MCF 10A (cell line): ENCODE measurements at regions of chr11 and their contacts with region 1.

Region 1: DNA sequence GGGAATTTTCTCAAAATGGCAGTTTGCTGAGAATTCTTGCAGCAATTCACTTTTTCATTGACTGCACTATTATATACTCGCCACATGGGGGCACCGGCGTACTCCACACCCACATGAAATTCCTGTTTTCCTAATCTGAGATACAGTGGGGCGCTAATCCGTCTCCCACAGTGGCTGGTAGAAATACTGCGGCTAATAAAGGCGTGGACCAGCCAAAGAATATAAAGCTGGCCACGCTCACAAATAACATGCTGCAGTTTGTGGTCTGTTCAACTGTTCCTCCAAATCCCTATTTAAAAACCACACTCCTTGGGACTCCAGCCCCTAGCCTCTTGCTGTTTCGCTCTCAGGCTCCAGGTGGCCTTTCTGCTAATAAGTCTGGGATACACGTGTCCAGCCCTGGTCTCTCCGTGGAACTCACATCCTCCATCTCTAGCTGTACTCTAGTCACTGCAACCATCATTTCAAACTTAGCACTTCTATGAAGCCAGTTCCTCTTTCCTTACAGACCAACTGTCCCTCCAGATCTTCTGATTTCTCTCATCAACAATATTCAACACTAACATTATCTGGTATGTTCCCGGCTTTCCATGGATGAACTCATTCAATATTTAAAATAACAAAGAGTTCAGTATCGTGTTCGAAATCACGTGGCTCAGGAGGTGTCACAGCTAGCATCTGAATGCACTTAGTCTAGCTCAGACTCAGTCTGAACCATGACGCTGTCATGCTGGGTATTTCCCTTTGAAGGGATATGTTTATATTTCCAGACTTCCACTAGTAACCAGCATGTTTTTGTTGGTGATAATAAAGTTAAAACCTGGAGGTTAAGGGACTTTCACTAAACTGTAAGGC is 22.0 kb downstream of the TBRG1 start:
- DNase-seq: peak; percentile 72
- H3K4me3 Mint-ChIP-seq: no peak overlapping the region
- H3K27ac Mint-ChIP-seq: no peak overlapping the region
- H3K4me1 Mint-ChIP-seq: peaks cover 15% of the 10 kb centered on the region
- H3K27me3 Mint-ChIP-seq: no peaks in the 10 kb centered on the region
- CTCF ChIP-seq: peak; percentile 79

Region 2: GRCh38 chr11:124633355-124633754 is 11.3 kb before region 1 on chr11:
- CTCF ChIA-PET with region 1: interaction called, 44 read pairs
- POLR2A ChIA-PET with region 1: interaction called, 4 read pairs
- intact Hi-C with region 1: no loop called
- DNase-seq: peak; percentile 13
- H3K4me3 Mint-ChIP-seq: no peak overlapping the region
- H3K27ac Mint-ChIP-seq: no peak overlapping the region
- H3K4me1 Mint-ChIP-seq: no peaks in the 10 kb centered on the region
- H3K27me3 Mint-ChIP-seq: no peaks in the 10 kb centered on the region
- CTCF ChIP-seq: no peak

Region 3: GRCh38 chr11:124667601-124668000 is 22.9 kb after region 1 on chr11:
- CTCF ChIA-PET with region 1: interaction called, 15 read pairs
- POLR2A ChIA-PET with region 1: interaction called, 3 read pairs
- intact Hi-C with region 1: no loop called
- DNase-seq: no peak
- H3K4me3 Mint-ChIP-seq: no peak overlapping the region
- H3K27ac Mint-ChIP-seq: no peak overlapping the region
- H3K4me1 Mint-ChIP-seq: peaks cover 5% of the 10 kb centered on the region
- H3K27me3 Mint-ChIP-seq: no peaks in the 10 kb centered on the region
- CTCF ChIP-seq: no peak

Region 4: DNA sequence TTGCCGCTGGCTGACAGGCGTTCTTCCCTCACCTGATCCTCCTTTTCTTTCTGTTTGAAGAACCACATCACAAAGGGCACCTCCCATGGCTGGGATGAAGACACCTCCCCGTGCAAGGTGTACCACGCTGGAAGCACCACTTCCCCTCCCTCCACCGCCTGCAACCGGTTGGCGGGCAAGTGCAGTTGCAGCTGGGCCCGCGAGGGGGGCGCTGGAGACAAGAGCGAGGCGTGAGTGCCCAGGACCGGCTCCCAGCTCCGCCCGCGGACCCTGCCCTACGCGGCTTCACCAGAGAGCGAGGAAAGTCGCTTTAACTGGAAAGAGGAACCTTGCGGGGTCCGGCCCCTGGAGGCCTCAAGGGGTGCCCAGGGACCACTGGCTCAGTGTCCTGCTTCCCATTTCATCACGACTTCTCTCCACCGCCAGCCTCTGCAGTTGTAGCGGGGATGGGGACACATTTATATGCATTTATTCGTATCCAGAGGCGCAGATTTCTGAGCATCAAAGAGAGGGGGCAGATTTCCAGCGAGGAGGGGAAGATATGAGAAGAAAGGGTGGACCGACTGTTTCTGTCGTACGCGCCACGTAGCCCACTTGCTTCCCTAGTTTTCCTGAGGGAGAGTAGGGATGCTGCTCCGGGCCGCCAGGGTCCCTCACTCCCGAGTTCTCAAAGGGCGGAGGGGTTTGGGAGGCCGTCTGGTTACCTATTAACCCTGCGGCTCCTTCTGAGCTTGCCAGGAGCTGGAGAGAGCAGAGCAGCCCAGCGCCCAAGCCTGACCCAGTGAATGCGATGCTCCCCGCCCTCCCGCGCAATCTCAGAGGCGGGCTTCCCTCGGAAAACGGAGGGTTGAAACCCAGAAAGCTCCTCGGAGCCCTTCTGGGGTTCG is 113.9 kb after region 1 on chr11:
- CTCF ChIA-PET with region 1: interaction called, 9 read pairs
- POLR2A ChIA-PET with region 1: no interaction called
- intact Hi-C with region 1: loop called (anchors 1 kb)
- DNase-seq: peak; percentile 41
- H3K4me3 Mint-ChIP-seq: peak overlapping the region; percentile 33
- H3K27ac Mint-ChIP-seq: no peak overlapping the region
- H3K4me1 Mint-ChIP-seq: peaks cover 5% of the 10 kb centered on the region
- H3K27me3 Mint-ChIP-seq: no peaks in the 10 kb centered on the region
- CTCF ChIP-seq: peak; percentile 34

Region 5: GRCh38 chr11:124793466-124794278 is 149.0 kb after region 1 on chr11:
- CTCF ChIA-PET with region 1: interaction called, 22 read pairs
- POLR2A ChIA-PET with region 1: interaction called, 7 read pairs
- intact Hi-C with region 1: no loop called
- DNase-seq: peak; percentile 73
- H3K4me3 Mint-ChIP-seq: no peak overlapping the region
- H3K27ac Mint-ChIP-seq: no peak overlapping the region
- H3K4me1 Mint-ChIP-seq: peaks cover 25% of the 10 kb centered on the region
- H3K27me3 Mint-ChIP-seq: no peaks in the 10 kb centered on the region
- CTCF ChIP-seq: peak; percentile 60

Region 6: GRCh38 chr11:124821995-124822730 is 177.5 kb after region 1 on chr11:
- CTCF ChIA-PET with region 1: no interaction called
- POLR2A ChIA-PET with region 1: no interaction called
- intact Hi-C with region 1: no loop called
- DNase-seq: no peak
- H3K4me3 Mint-ChIP-seq: no peak overlapping the region
- H3K27ac Mint-ChIP-seq: no peak overlapping the region
- H3K4me1 Mint-ChIP-seq: no peaks in the 10 kb centered on the region
- H3K27me3 Mint-ChIP-seq: peaks cover 29% of the 10 kb centered on the region
- CTCF ChIP-seq: no peak

Region 7: GRCh38 chr11:124837491-124837856 is 192.8 kb after region 1 on chr11:
- CTCF ChIA-PET with region 1: interaction called, 66 read pairs
- POLR2A ChIA-PET with region 1: no interaction called
- intact Hi-C with region 1: loop called (anchors 1 kb)
- DNase-seq: peak; percentile 80
- H3K4me3 Mint-ChIP-seq: no peak overlapping the region
- H3K27ac Mint-ChIP-seq: no peak overlapping the region
- H3K4me1 Mint-ChIP-seq: peaks cover 4% of the 10 kb centered on the region
- H3K27me3 Mint-ChIP-seq: peaks cover 27% of the 10 kb centered on the region
- CTCF ChIP-seq: peak; percentile 26